ENCODE measurements at regions of chr7 and their contacts with region 1.

Region 1: DNA sequence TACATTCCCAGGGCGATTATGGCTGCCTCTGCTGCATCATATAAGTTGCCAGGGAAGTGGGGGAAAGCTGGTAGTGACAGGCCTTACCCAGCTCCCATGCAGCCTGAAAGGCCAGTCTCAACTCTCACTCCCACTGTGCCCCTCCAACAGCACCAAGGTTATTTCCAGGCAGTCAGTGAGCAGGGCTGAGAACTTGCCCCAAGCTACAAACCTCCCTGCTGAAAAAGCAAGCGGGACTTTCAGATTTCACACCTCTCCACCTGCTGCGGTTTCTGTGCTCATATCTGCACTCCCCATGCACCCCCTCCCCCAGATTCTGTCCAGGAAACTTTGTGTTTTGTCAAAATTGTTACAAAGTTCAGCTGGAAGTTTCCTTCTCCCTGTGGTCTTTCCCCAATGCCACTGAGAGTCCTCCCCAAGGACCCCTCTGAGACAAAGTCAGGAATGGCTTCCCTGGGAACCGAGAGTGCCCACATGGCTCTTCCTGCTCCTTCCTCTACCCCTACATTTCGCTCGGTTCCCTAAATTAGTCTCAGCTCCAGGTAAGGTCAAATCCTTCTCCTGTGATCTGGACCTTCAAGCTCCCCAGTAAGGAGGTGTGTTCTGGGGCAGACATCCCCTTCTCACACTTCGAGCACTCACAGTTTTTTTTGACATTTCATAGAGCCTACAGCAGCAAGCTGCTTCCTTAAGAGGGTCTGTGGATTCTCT is 25.3 kb upstream of the WNT2 start:
- DNase-seq: peak; percentile 84
- ATAC-seq: peak; percentile 97
- H3K4me3 ChIP-seq: no peak overlapping the region
- H3K27ac ChIP-seq: peak overlapping the region; percentile 41
- H3K4me1 ChIP-seq: peaks cover 19% of the 10 kb centered on the region
- H3K27me3 ChIP-seq: no peaks in the 10 kb centered on the region
- CTCF ChIP-seq: no peak
- EP300 ChIP-seq: peak in 1 of 2 experiments; percentile 90; a peak in 3 of 4 replicates
- POLR2A ChIP-seq: no peak
- RAD21 ChIP-seq: no peak

Region 2: GRCh38 chr7:116772423-116772863 is 575.7 kb before region 1 on chr7:
- CTCF ChIA-PET with region 1: no interaction called
- POLR2A ChIA-PET with region 1: no interaction called
- RAD21 ChIA-PET with region 1: no interaction called
- SMC1A ChIA-PET with region 1: no interaction called
- in situ Hi-C with region 1: no loop called
- intact Hi-C with region 1: no loop called
- DNase-seq: no peak
- ATAC-seq: no peak
- H3K4me3 ChIP-seq: no peak overlapping the region
- H3K27ac ChIP-seq: no peak overlapping the region
- H3K4me1 ChIP-seq: no peaks in the 10 kb centered on the region
- H3K27me3 ChIP-seq: peaks cover 0 to 8% of the 10 kb centered on the region in 2 experiments; a peak in 2 of 4 replicates
- CTCF ChIP-seq: no peak
- EP300 ChIP-seq: no peak
- POLR2A ChIP-seq: no peak
- RAD21 ChIP-seq: no peak

Region 3: GRCh38 chr7:117230276-117231046 is 117.7 kb before region 1 on chr7:
- CTCF ChIA-PET with region 1: interaction called, 13 read pairs
- POLR2A ChIA-PET with region 1: interaction called, 16 read pairs
- RAD21 ChIA-PET with region 1: interaction called, 49 read pairs
- SMC1A ChIA-PET with region 1: interaction called, 53 read pairs
- in situ Hi-C with region 1: no loop called
- intact Hi-C with region 1: loop called (anchors 1 kb)
- DNase-seq: peak; percentile 66
- ATAC-seq: peak; percentile 92
- H3K4me3 ChIP-seq: no peak overlapping the region
- H3K27ac ChIP-seq: peak overlapping the region; percentile 74
- H3K4me1 ChIP-seq: peaks cover 12% of the 10 kb centered on the region
- H3K27me3 ChIP-seq: no peaks in the 10 kb centered on the region
- CTCF ChIP-seq: no peak
- EP300 ChIP-seq: peak; percentile 25 to 64; a peak in 1 of 4 replicates
- POLR2A ChIP-seq: no peak
- RAD21 ChIP-seq: no peak

Region 4: DNA sequence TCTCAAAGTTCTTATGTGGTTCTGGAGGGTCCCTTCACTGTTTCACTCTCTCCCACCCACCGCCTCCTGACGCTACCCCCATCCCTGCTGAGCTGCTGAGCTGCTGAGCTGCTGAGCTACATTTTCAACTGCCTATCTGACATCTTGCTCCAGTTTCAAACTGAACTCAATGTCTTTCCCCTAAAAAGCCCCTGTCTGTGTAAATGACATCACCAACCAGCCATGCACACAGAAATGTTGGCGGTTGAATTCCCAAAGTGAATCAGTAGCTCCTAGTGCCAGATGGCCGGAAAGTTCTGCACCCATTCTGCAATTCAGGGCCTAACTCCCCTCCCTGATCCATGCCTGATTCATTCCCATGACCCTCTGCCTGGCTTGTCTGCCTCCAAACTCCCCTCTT is 96.4 kb before region 1 on chr7:
- CTCF ChIA-PET with region 1: interaction called, 3 read pairs
- POLR2A ChIA-PET with region 1: interaction called, 25 read pairs
- RAD21 ChIA-PET with region 1: interaction called, 12 read pairs
- SMC1A ChIA-PET with region 1: interaction called, 29 read pairs
- in situ Hi-C with region 1: no loop called
- intact Hi-C with region 1: no loop called
- DNase-seq: peak; percentile 35
- ATAC-seq: peak; percentile 84
- H3K4me3 ChIP-seq: no peak overlapping the region
- H3K27ac ChIP-seq: no peak overlapping the region
- H3K4me1 ChIP-seq: peaks cover 4% of the 10 kb centered on the region
- H3K27me3 ChIP-seq: no peaks in the 10 kb centered on the region
- CTCF ChIP-seq: no peak
- EP300 ChIP-seq: peak in 1 of 2 experiments; percentile 49; a peak in 1 of 4 replicates
- POLR2A ChIP-seq: no peak
- RAD21 ChIP-seq: no peak

Region 5: DNA sequence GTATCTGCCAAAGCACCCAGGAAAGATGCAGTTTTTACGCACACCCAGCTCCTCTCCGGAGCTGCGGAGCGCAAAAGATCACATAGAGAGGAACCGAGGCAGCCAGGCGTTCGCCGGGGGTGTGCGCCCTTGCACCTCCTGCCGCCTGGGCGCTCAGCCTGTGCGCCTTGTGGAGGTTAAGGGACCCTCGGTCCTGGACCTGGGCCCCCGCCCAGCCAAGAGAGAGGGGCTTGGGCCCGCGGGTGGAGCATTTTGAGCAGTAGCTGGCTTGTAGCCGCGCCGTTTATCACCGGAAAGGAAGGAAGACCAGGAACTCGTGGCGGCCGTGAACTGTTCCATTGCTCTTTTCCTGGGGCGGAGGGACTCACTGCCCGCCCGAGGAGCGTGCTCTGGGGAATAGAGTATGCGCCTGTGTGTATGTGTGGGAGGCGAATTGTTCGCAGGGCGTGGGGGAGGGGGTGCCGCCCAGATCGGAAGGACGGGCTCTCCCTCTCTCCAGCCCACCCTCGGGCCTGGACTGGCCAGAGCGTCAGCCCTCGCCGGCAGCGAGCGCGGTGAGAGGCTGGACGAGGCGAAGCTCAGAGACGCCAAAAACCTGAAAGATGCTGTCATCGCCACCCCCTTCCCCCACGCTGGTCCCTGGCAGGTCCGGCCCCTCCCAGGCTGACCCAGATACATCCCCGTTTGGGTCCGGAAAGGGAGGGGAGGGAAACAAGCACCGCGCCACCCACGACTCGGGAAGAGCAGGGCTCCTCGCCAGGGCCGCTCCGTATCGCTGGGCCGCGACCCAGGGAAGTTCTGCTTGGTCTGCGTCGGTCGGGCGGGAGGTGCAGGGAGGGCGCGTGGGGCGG is 24.0 kb before region 1 on chr7:
- CTCF ChIA-PET with region 1: interaction called, 4 read pairs
- POLR2A ChIA-PET with region 1: interaction called, 5 read pairs
- RAD21 ChIA-PET with region 1: interaction called, 26 read pairs
- SMC1A ChIA-PET with region 1: interaction called, 41 read pairs
- in situ Hi-C with region 1: no loop called
- intact Hi-C with region 1: no loop called
- DNase-seq: no peak
- ATAC-seq: peak; percentile 64
- H3K4me3 ChIP-seq: peak overlapping the region; percentile 49
- H3K27ac ChIP-seq: no peak overlapping the region
- H3K4me1 ChIP-seq: no peaks in the 10 kb centered on the region
- H3K27me3 ChIP-seq: peaks cover 10 to 27% of the 10 kb centered on the region in 2 experiments
- CTCF ChIP-seq: no peak
- EP300 ChIP-seq: no peak
- POLR2A ChIP-seq: no peak
- RAD21 ChIP-seq: no peak

Region 6: GRCh38 chr7:117362294-117362888 is 14.3 kb after region 1 on chr7:
- CTCF ChIA-PET with region 1: interaction called, 19 read pairs
- POLR2A ChIA-PET with region 1: interaction called, 17 read pairs
- RAD21 ChIA-PET with region 1: interaction called, 26 read pairs
- SMC1A ChIA-PET with region 1: interaction called, 41 read pairs
- in situ Hi-C with region 1: no loop called
- intact Hi-C with region 1: no loop called
- DNase-seq: no peak
- ATAC-seq: peak; percentile 80
- H3K4me3 ChIP-seq: no peak overlapping the region
- H3K27ac ChIP-seq: no peak overlapping the region
- H3K4me1 ChIP-seq: no peaks in the 10 kb centered on the region
- H3K27me3 ChIP-seq: no peaks in the 10 kb centered on the region
- CTCF ChIP-seq: no peak
- EP300 ChIP-seq: no peak
- POLR2A ChIP-seq: no peak
- RAD21 ChIP-seq: no peak

Region 7: GRCh38 chr7:117385340-117386109 is 37.4 kb after region 1 on chr7:
- CTCF ChIA-PET with region 1: interaction called, 8 read pairs
- POLR2A ChIA-PET with region 1: interaction called, 4 read pairs
- RAD21 ChIA-PET with region 1: interaction called, 28 read pairs
- SMC1A ChIA-PET with region 1: interaction called, 46 read pairs
- in situ Hi-C with region 1: no loop called
- intact Hi-C with region 1: loop called (anchors 5 kb)
- DNase-seq: no peak
- ATAC-seq: peak; percentile 90
- H3K4me3 ChIP-seq: no peak overlapping the region
- H3K27ac ChIP-seq: no peak overlapping the region
- H3K4me1 ChIP-seq: no peaks in the 10 kb centered on the region
- H3K27me3 ChIP-seq: no peaks in the 10 kb centered on the region
- CTCF ChIP-seq: peak; percentile 25 to 68 (median 46); a peak in 4 of 6 replicates
- EP300 ChIP-seq: no peak
- POLR2A ChIP-seq: no peak
- RAD21 ChIP-seq: peak; percentile 75

Measured in GM12878 (cell line).